ENCODE measurements at regions of chr16 and their contacts with region 1.

Region 1: GRCh38 chr16:50665128-50665878 is 15.8 kb downstream of the SNX20 start:
- DNase-seq: peak; percentile 89
- ATAC-seq: peak; percentile 54
- H3K4me3 Mint-ChIP-seq: peak overlapping the region; percentile 51
- H3K27ac Mint-ChIP-seq: peak overlapping the region; percentile 92
- H3K4me1 Mint-ChIP-seq: peaks cover 42% of the 10 kb centered on the region
- H3K27me3 Mint-ChIP-seq: no peaks in the 10 kb centered on the region

Region 2: DNA sequence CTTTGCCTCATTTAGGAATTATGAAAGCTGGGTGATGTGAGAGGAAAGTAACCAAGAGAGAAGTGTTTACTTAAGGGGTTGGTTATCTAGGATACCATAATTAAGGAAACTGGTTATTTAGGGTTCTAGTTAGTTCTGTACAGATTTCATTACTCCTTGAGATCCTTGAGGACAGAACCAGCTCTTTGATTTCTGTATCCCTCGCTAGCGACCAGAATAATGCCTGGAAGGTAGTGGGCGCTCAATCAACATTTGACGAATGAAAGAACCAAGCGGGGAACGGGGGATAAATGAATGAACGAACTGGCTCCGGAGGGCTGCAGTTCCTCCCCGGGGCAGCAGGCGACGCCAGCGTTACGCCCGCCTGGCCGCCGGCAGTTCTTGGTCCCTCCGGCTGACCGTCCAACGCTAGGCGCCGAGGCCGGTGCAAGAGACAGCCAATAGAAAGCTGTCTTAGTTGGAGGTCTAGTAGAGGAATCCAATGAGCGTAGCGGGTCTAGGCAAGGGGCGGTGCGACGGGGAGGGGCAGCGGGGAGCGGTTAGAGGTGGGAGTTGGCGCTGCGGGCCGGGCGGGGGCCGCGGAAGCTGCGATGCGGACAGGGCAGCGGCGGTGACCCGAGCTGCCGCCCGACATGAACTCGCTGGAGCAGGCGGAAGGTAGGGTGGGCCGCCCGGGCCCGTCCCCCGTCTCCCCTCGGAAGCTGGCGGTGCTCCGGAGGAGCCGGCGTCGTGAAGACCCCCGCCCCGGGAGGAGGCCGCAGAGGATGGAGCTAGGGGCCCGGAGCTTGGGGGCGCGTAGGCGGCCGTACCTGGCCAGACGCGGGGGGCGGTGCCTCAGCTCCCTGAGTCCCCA is 640.4 kb before region 1 on chr16 and contains the start of gene CNEP1R1:
- CTCF ChIA-PET with region 1: interaction called, 28 read pairs
- DNase-seq: peak; percentile 97
- ATAC-seq: peak; percentile 99
- H3K4me3 Mint-ChIP-seq: peak within 1 kb of the TSS; percentile 96
- H3K27ac Mint-ChIP-seq: peak within 1 kb of the TSS; percentile 90
- H3K4me1 Mint-ChIP-seq: peaks cover 20% of the 10 kb centered on the region
- H3K27me3 Mint-ChIP-seq: peaks cover 2% of the 10 kb centered on the region
- total RNA-seq, gene CNEP1R1: 27.7 to 28.4 TPM

Region 3: GRCh38 chr16:50326949-50327402 is 338.3 kb before region 1 on chr16:
- CTCF ChIA-PET with region 1: interaction called, 74 read pairs
- DNase-seq: peak; percentile 88
- ATAC-seq: peak; percentile 97
- H3K4me3 Mint-ChIP-seq: no peak overlapping the region
- H3K27ac Mint-ChIP-seq: peak overlapping the region; percentile 69
- H3K4me1 Mint-ChIP-seq: peaks cover 50% of the 10 kb centered on the region
- H3K27me3 Mint-ChIP-seq: no peaks in the 10 kb centered on the region

Region 4: GRCh38 chr16:50360033-50360778 is 305.1 kb before region 1 on chr16:
- CTCF ChIA-PET with region 1: interaction called, 23 read pairs
- DNase-seq: no peak
- ATAC-seq: no peak
- H3K4me3 Mint-ChIP-seq: no peak overlapping the region
- H3K27ac Mint-ChIP-seq: no peak overlapping the region
- H3K4me1 Mint-ChIP-seq: peaks cover 35% of the 10 kb centered on the region
- H3K27me3 Mint-ChIP-seq: no peaks in the 10 kb centered on the region

Region 5: GRCh38 chr16:50377001-50377400 is 288.3 kb before region 1 on chr16:
- CTCF ChIA-PET with region 1: interaction called, 10 read pairs
- DNase-seq: no peak
- ATAC-seq: no peak
- H3K4me3 Mint-ChIP-seq: no peak overlapping the region
- H3K27ac Mint-ChIP-seq: no peak overlapping the region
- H3K4me1 Mint-ChIP-seq: no peaks in the 10 kb centered on the region
- H3K27me3 Mint-ChIP-seq: peaks cover 20% of the 10 kb centered on the region

Region 6: GRCh38 chr16:50397196-50397595 is 268.1 kb before region 1 on chr16:
- CTCF ChIA-PET with region 1: no interaction called
- DNase-seq: no peak
- ATAC-seq: no peak
- H3K4me3 Mint-ChIP-seq: no peak overlapping the region
- H3K27ac Mint-ChIP-seq: no peak overlapping the region
- H3K4me1 Mint-ChIP-seq: peaks cover 3% of the 10 kb centered on the region
- H3K27me3 Mint-ChIP-seq: no peaks in the 10 kb centered on the region

Region 7: GRCh38 chr16:50603206-50604064 is 61.9 kb before region 1 on chr16:
- CTCF ChIA-PET with region 1: no interaction called
- DNase-seq: no peak
- ATAC-seq: no peak
- H3K4me3 Mint-ChIP-seq: no peak overlapping the region
- H3K27ac Mint-ChIP-seq: no peak overlapping the region
- H3K4me1 Mint-ChIP-seq: peaks cover 3% of the 10 kb centered on the region
- H3K27me3 Mint-ChIP-seq: no peaks in the 10 kb centered on the region

Region 8: GRCh38 chr16:50635505-50636392 is 29.6 kb before region 1 on chr16:
- CTCF ChIA-PET with region 1: interaction called, 18 read pairs
- DNase-seq: peak; percentile 55
- ATAC-seq: peak; percentile 27
- H3K4me3 Mint-ChIP-seq: no peak overlapping the region
- H3K27ac Mint-ChIP-seq: no peak overlapping the region
- H3K4me1 Mint-ChIP-seq: peaks cover 3% of the 10 kb centered on the region
- H3K27me3 Mint-ChIP-seq: no peaks in the 10 kb centered on the region

Region 9: GRCh38 chr16:50696575-50697420 is 31.5 kb after region 1 on chr16:
- CTCF ChIA-PET with region 1: interaction called, 31 read pairs
- DNase-seq: peak; percentile 86
- ATAC-seq: peak; percentile 75
- H3K4me3 Mint-ChIP-seq: peak overlapping the region; percentile 82
- H3K27ac Mint-ChIP-seq: peak overlapping the region; percentile 93
- H3K4me1 Mint-ChIP-seq: peaks cover 72% of the 10 kb centered on the region
- H3K27me3 Mint-ChIP-seq: no peaks in the 10 kb centered on the region

Measured in activated CD8-positive, alpha-beta memory T cell treated with anti-CD3 and anti-CD28 coated beads, Interleukin-2, amount 10 ng/mL, durations not matched to agents 7 days and 5 days (primary cell).